ENCODE measurements at regions of chr5 and their contacts with region 1.

Region 1: DNA sequence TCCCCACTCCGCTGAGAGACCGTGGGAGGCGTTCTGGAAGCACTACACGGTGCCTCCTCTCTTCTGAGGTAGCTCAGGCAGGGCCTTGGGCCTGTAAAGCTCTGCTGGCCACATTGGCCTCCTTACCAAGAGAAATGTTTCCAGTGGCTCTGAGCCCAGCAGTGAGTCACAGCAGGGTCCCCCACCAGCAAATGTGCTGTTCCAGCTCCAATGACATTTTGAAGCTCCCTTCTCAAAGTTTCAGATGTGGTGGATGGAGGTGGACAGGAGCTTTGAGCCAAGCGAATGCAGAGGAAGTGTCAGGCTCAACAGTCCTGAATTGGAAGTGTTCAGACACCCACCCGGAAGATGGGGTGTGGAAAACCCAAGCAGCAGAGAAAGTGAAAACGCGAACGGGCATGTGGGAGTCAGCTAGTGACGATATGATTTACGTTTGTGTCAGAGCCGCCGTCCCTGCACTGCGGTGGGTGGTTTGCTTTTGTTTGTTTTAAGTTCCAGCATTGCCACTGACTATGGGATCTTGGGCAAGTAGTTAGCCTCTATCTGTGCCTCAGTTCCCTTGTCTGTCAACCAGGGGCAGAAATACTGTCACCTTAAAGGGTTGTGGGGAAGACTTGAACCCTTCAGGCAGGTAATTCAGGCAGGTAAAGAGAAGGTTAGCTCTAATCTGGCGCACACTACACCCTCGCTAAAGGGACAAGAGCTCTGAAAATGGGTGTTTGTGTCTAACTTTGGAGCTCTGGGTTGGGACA is 38.2 kb downstream of the C5orf15 start:
- DNase-seq: peak; percentile 54
- ATAC-seq: peak; percentile 35 to 66

Region 2: DNA sequence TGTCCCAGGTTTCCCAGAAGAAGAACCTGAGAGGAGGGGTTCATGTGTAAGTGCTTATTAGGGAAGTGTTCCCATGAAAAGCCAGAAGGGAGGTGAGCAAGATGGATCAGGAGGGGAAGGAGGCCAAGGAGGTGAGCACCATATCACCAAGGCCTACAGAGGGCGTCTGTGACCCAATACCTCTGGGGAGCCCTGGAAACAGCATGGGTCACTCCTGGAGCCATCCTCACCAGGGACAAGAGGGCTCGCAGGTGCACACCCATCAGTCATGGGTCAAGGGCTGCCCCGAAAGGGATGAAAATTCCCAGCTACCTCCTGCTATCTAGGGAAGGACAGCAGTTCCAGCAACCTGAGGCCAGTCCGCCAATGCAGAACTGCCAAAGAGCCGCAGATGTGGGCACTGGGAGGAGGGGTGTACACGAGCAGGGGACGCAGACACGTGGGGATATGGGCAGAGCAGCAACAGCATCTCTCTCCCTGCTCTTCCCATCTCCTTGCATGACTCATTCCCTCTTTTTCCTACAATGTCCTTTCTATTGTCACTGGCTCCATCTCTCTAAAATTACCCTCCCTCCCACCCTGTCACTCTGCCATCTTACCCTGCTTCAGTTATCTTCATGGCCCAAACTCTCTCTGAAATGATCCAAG is 150.3 kb before region 1 on chr5:
- intact Hi-C with region 1: loop called in 1 of 2 experiments (anchors 10 kb)
- DNase-seq: no peak
- ATAC-seq: peak in 1 of 2 donors; percentile 8

Region 3: GRCh38 chr5:134029156-134029555 is 98.9 kb after region 1 on chr5:
- intact Hi-C with region 1: no loop called
- DNase-seq: no peak
- ATAC-seq: no peak

Measured in left cardiac atrium (tissue), 4 donors.